AG04449 (cell line): ENCODE measurements at regions of chr5 and their contacts with region 1.

Region 1: DNA sequence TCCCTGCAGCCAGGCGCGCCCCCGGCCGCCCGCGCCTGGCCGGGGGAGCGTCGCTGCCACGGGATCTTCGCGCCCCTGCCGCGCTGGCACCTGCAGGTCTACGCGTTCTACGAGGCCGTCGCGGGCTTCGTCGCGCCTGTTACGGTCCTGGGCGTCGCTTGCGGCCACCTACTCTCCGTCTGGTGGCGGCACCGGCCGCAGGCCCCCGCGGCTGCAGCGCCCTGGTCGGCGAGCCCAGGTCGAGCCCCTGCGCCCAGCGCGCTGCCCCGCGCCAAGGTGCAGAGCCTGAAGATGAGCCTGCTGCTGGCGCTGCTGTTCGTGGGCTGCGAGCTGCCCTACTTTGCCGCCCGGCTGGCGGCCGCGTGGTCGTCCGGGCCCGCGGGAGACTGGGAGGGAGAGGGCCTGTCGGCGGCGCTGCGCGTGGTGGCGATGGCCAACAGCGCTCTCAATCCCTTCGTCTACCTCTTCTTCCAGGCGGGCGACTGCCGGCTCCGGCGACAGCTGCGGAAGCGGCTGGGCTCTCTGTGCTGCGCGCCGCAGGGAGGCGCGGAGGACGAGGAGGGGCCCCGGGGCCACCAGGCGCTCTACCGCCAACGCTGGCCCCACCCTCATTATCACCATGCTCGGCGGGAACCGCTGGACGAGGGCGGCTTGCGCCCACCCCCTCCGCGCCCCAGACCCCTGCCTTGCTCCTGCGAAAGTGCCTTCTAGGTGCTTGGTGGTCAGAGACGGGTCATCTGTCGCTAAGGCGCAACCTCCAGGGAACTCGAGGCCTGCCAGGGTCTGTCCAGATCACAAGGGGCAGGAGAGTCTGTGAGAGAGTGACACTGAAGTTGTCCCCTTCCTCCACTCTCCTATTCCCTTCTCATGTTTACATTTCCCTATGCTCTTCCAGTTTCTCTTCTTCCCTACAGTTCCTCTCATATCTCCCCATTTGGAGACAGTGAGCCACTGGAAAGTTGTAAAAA is 1.3 kb downstream of the GPR150 start:
- DNase-seq: no peak
- H3K4me3 ChIP-seq: peak overlapping the region; percentile 58
- CTCF ChIP-seq: peak; percentile 16

Region 2: DNA sequence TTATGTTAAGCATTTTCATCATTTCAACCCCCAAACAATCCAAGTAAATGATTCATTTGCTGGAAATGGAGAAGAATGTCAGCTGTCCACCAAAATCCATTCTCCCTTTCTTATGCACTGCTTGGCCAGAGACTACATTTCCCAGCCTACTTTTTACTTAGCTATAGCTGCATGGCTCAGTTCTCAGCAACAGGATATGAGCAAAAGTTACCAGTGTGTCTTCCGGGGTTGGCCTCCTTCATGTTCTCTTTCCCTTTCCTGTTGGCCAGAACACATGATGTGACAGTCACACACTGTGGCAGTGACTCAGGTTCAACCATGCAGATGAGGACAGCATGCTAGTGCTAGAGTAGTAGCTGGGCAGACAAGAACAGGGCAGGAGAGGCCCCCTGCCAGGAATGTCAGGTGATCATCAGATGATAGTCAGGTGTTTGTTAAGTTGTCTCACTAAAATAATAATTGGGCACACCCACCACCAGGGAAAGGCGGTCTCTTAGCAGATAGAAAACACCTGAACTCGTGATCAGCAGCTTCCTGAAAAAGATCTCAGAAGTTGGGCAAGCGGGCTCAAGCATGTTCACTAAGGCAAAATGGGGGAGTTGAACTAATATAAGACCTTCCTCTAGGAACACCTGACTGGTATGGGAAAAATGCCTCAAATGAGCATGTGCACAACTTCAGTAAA is 11.0 kb after region 1 on chr5:
- CTCF ChIA-PET with region 1: interaction called, 12 read pairs
- POLR2A ChIA-PET with region 1: no interaction called
- DNase-seq: no peak
- H3K4me3 ChIP-seq: no peak overlapping the region
- CTCF ChIP-seq: no peak